ENCODE measurements at regions of chr18 and their contacts with region 1.

Region 1: GRCh38 chr18:3593904-3594661 is 144.1 kb downstream of the TGIF1 start:
- DNase-seq: peak; percentile 94
- H3K27ac ChIP-seq: peak overlapping the region; percentile 98
- CTCF ChIP-seq: peak; percentile 95

Region 2: DNA sequence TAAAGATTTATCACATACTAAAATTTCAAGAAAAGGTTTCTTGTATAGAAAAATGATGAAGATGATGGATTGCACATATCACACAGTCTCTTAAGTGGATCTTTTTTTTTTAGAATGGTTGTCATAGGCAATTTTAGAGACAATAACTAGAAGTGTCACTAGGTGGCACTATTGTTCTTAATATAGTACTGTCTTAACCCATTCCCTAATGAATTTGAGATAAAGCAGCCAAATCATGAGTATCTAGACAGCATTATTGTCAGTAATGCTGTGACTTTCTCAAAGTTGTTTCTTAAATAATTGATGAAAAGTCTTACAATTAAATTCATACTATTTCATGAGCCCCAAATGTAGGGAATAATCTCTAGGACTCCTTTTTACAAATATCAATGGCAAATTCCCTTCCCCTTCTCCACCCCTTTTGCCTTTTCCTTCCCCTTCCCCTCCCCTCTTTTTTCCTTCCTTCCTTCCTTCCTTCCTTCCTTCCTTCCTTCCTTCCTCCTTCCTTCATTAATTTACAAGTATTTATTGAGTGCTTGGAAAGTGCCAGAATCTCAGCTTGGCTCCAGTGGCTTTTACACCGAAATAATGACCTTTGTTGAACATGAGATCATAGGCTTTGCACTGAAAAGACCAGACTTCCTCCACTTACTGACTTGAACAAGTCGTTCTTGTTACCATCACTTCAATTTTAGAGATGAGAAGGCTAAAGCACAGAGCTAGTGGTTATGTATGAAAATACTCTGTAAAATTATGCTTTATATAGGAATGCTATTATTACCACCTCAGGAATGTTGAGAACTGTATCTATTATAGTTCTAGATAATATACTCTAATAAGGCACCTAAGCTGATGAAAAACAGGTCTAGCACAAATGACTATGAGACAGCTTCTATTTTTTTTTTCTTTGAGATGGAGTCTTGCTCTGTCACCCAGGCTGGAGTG is 312.4 kb before region 1 on chr18:
- CTCF ChIA-PET with region 1: no interaction called
- POLR2A ChIA-PET with region 1: interaction called, 15 read pairs
- DNase-seq: peak; percentile 70
- H3K27ac ChIP-seq: no peak overlapping the region
- CTCF ChIP-seq: peak; percentile 56

Region 3: GRCh38 chr18:3679241-3679640 is 85.2 kb after region 1 on chr18:
- CTCF ChIA-PET with region 1: no interaction called
- POLR2A ChIA-PET with region 1: no interaction called
- DNase-seq: peak; percentile 68
- H3K27ac ChIP-seq: peak overlapping the region; percentile 80
- CTCF ChIP-seq: no peak

Region 4: GRCh38 chr18:3771121-3771971 is 177.3 kb after region 1 on chr18:
- CTCF ChIA-PET with region 1: no interaction called
- POLR2A ChIA-PET with region 1: no interaction called
- DNase-seq: peak; percentile 91
- H3K27ac ChIP-seq: peak overlapping the region; percentile 31; the same call in 1 of the 2 replicates
- CTCF ChIP-seq: peak; percentile 96